Body of pancreas (tissue), 4 donors: ENCODE measurements at regions of chr18 and their contacts with region 1.

Region 1: DNA sequence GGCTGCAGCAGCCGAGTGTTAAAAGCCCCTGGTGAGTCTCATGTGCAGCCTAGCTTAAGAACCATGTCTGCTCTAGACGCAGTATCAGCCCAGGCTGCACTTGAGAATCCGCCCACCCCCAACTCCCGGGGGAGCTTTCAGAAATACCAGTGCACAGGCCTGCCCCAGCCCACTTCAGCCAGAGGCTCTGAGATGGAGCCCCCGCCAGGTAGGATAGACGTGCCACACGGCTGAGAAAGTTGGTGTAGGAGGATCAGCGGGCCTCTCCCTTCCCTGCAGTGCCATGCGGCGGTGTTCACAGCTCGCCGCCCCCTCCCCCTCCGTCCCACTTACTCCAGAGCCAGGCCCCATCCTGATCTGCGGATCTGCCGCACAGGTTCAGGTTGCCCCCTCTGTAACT is 208.9 kb upstream of the RAB12 start:
- DNase-seq: no peak
- ATAC-seq: no peak
- H3K4me3 ChIP-seq: no peak overlapping the region
- H3K27ac ChIP-seq: no peak overlapping the region
- H3K4me1 ChIP-seq: peaks cover 8% of the 10 kb centered on the region
- H3K27me3 ChIP-seq: no peaks in the 10 kb centered on the region
- CTCF ChIP-seq: no peak
- POLR2A ChIP-seq: no peak

Region 2: GRCh38 chr18:8229775-8230174 is 170.5 kb before region 1 on chr18:
- intact Hi-C with region 1: no loop called
- DNase-seq: no peak
- ATAC-seq: no peak
- H3K4me3 ChIP-seq: no peak overlapping the region
- H3K27ac ChIP-seq: no peak overlapping the region
- H3K4me1 ChIP-seq: no peaks in the 10 kb centered on the region
- H3K27me3 ChIP-seq: no peaks in the 10 kb centered on the region
- CTCF ChIP-seq: no peak
- POLR2A ChIP-seq: no peak

Region 3: DNA sequence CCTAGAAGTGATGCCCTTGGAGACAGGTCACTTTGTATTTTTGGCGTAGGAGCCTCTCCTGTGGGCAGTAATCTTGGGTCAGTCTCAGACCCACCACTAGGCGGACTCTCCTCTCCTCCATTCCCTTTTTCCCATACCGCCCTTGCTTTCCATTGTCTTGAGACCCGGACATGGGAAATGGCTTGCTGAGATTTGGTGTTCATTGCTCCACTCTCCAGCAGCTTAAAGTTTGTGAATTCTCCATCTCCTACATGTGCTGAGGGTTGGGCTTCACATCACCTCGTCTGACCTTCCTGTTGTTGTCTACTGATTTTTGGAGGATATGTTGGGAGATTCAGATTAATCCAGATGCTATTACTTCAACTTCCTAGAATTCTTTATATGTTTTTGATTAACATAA is 49.7 kb after region 1 on chr18:
- intact Hi-C with region 1: loop called (anchors 10 kb)
- DNase-seq: peak in 1 of 4 donors; percentile 12
- ATAC-seq: no peak
- H3K4me3 ChIP-seq: no peak overlapping the region
- H3K27ac ChIP-seq: no peak overlapping the region
- H3K4me1 ChIP-seq: no peaks in the 10 kb centered on the region
- H3K27me3 ChIP-seq: no peaks in the 10 kb centered on the region
- CTCF ChIP-seq: peak in 2 of 7 experiments; percentile 12 to 17
- POLR2A ChIP-seq: no peak

Region 4: DNA sequence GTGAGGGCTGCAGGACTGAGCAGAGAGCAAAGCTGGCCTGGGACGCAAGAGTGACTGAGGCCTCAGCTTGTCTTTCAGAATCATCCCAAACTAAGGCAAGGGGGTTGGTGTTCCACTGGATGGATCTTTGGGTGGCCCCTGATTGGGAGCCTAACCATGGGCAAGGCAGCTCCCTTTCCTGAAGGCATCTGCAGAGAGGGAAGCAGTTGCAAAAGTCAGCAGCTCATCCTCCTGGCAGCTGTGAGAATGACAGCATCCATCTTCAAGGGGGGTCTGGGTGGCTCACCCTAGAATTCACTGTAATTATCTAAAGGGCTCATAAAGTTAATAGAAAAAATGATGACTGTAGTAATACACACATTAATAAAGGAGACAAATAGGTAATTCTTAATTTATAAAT is 1261.3 kb after region 1 on chr18:
- intact Hi-C with region 1: no loop called
- DNase-seq: no peak
- ATAC-seq: no peak
- H3K4me3 ChIP-seq: no peak overlapping the region
- H3K27ac ChIP-seq: no peak overlapping the region
- H3K4me1 ChIP-seq: no peaks in the 10 kb centered on the region
- H3K27me3 ChIP-seq: no peaks in the 10 kb centered on the region
- CTCF ChIP-seq: no peak
- POLR2A ChIP-seq: no peak